PC-9 (cell line): ENCODE measurements at regions of chr5 and their contacts with region 1.

Region 1: DNA sequence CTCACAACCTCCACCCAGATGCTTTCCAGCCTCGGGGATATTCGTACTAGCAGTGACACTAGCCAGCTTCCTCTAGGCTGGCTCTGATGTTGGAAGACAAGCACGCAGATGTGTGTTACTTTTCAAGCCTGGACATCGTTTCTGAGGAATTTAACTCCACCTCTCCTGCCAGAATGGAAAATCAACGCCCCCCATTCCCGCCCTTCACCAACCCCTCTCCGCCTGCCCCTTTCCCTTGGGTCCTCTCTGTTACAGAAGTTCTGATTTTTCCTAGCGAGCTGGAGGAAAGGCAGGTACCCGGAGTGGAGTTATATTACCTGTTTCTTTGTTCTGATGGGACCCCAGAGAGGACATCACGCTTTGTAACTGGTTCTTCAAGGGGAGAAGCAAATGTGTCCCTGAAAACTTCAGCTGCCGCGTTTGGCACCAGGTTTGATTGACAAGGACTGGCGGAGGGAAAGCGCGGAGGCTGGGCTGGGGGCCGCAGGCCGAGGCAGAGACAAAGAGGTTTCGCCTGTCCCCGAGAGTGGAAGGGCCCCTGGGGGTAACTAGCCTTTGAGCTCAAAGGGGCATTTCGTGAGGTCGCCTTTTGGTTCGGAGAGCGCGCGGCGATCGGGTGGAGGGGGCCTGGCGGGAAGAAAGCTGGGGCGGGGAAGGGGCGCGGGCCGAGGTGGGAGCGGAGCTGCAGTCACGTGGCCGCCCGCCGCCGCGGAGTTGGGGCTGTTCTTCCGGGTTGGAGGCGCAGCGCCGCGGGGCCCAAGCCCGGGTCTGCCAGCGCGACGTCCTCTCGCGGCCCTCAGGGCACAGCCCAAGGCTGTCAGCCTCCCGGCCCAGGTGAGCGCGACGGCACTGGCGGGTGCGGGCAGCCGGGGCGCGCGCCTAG is at the start of gene NNT:
- DNase-seq: peak; percentile 60 to 88
- H3K4me3 ChIP-seq: peak within 1 kb of the TSS; percentile 81
- H3K27ac ChIP-seq: no peak within 1 kb of the TSS
- H3K4me1 ChIP-seq: peaks cover 21% of the 10 kb centered on the region
- H3K27me3 ChIP-seq: no peaks in the 10 kb centered on the region
- CTCF ChIP-seq: 0 out of 2 replicates have a peak, but pooled peaks have one; percentile 6
- total RNA-seq, gene NNT: 92.6 and 112 TPM in 2 replicates

Region 2: DNA sequence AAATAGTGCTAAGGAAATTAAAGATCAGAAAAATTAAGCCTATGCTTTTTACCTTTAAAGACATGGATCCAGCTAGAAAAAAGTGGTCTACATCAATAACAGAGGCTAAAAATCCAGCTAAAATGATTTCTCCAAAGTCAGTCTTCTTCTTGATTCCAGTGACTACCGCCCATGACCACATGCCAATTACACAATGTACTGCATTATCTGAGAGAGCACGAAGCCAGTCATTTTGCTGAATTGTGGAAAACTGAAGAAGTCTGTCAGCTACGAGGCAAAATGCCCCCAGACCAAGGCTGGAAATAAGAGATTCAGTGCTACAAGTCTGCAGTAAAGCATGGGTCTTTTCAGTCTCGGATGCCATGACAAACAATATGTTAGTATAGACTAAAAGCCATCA is 149.1 kb before region 1 on chr5:
- CTCF ChIA-PET with region 1: no interaction called
- POLR2A ChIA-PET with region 1: no interaction called
- intact Hi-C with region 1: no loop called
- DNase-seq: peak in 1 of 2 experiments; percentile 25
- H3K4me3 ChIP-seq: no peak overlapping the region
- H3K27ac ChIP-seq: no peak overlapping the region
- H3K4me1 ChIP-seq: no peaks in the 10 kb centered on the region
- H3K27me3 ChIP-seq: no peaks in the 10 kb centered on the region
- CTCF ChIP-seq: no peak

Region 3: DNA sequence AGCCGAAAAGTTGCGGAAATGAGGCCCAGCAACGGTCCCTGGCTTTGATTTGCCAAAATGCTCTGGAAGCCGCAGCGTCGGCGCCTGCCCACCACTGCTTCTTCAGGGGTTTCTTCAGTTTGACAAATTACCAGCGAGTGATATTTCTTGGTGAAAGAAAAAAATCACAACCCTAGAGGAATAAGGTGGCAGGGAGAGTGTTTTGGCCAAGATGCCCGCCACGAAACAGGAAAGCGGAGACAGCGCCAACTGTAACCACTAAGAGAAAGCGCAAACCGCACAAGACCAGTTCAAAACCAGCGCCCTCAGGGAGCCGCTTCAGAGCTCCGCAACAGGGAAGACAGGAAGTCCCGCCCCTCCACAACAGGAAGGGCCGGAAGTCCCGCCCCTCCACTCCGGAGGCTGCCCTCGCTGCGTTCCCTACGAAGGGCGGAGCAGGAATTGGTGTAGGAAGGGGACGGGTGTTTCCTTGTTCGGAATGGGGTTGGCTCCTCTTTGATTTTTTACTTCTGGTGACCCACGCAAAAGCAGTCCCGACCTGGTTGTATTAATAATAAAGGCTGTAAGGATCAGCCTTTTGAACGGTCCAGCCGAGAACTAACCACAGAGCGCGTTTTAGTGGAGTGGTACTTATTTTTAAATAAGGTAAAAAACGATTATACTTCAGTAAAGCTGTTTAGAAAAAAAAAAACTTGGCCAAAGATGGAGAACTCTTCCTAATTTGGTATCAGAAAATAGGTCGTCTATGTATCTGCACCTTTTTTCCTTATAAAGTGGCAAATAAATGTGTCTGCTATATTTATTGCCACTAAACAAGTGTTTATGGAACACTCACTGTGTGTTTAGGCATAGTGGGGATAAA is 87.7 kb before region 1 on chr5 and contains the start of gene C5orf34:
- CTCF ChIA-PET with region 1: no interaction called
- POLR2A ChIA-PET with region 1: interaction called, 4 read pairs
- intact Hi-C with region 1: loop called (anchors 1 kb)
- DNase-seq: peak; percentile 99 to 100
- H3K4me3 ChIP-seq: peak within 1 kb of the TSS; percentile 73
- H3K27ac ChIP-seq: peak within 1 kb of the TSS; percentile 72
- H3K4me1 ChIP-seq: peaks cover 22% of the 10 kb centered on the region
- H3K27me3 ChIP-seq: no peaks in the 10 kb centered on the region
- CTCF ChIP-seq: 0 out of 2 replicates have a peak, but pooled peaks have one; percentile 15
- total RNA-seq, gene C5orf34: 16.0 and 22.6 TPM in 2 replicates

Region 4: GRCh38 chr5:43556857-43557542 is 45.7 kb before region 1 on chr5 and contains the start of gene PAIP1:
- CTCF ChIA-PET with region 1: no interaction called
- POLR2A ChIA-PET with region 1: interaction called, 10 read pairs
- intact Hi-C with region 1: loop called (anchors 1 kb)
- DNase-seq: peak; percentile 86 to 98
- H3K4me3 ChIP-seq: peak within 1 kb of the TSS; percentile 88
- H3K27ac ChIP-seq: peak within 1 kb of the TSS; percentile 76
- H3K4me1 ChIP-seq: peaks cover 34% of the 10 kb centered on the region
- H3K27me3 ChIP-seq: no peaks in the 10 kb centered on the region
- CTCF ChIP-seq: peak; percentile 71
- total RNA-seq, gene PAIP1: 183 and 191 TPM in 2 replicates

Region 5: DNA sequence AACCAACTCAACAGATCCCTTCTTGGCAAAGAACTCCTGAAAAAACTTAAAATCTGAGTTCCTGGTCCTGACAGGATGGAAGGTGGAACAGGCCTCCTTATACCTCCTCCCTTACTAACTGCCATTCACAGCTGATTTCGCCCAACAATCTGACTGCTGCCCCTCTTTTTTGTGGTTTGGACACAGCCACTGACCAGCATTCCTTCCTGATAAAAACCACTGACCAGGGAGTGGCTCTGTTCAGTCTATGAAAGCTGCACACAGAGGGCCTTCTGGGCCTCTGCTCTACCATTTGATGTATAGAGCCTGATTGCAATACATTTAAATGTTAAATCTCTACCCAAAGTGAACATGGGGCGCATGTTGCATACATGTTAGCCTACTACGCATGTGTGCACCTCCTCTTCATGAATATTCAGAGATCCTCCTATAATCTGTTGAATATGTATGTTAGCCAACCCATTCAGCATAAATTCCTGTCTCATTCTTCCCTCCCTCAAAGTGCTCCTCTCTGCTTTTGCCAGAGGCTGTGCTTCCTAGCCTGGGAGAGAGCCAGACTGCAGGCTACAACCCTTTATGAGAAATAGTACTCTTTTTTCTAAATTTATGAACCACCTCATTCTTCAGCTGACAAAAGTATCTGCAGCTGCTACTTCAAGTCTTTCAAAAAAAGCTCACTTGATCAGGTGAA is 1112.3 kb after region 1 on chr5:
- CTCF ChIA-PET with region 1: no interaction called
- POLR2A ChIA-PET with region 1: interaction called, 17 read pairs
- intact Hi-C with region 1: no loop called
- DNase-seq: peak in 1 of 2 experiments; percentile 20
- H3K4me3 ChIP-seq: no peak overlapping the region
- H3K27ac ChIP-seq: no peak overlapping the region
- H3K4me1 ChIP-seq: no peaks in the 10 kb centered on the region
- H3K27me3 ChIP-seq: no peaks in the 10 kb centered on the region
- CTCF ChIP-seq: no peak